ENCODE measurements at regions of chrX and their contacts with region 1.

Region 1: DNA sequence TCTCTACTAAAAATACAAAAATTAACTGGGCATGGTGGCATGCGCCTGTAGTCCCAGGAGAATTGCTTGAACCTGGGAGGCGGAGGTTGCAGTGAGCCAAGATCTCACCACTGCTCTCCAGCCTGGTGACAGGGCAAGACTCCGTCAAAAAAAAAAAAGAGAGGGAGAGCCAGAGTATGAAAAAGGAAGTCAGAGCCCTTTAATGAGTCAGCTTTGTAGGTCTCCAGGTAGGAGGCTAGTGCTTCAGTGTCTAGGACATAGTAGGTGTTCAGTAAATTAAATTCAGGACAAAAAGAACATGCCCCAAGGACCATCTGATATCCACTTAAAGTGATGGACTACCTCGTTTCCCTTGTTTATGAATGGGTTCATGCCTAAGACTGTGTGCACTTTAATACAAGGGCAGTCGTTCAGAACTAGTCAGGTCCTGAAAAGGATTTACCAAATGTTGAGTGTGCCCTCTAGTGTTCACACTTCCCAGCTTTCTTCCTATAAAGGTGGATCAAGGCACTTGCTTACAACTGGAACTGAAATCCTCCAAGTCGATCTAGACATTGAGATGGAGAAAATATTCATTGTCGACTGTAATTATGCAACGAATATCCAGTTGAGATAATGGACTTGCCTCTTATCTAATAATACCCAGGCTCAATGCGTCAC is 29.0 kb downstream of the F9 start:
- DNase-seq: peak; percentile 21 to 57 (median 37)
- H3K4me3 ChIP-seq: no peak overlapping the region
- H3K4me3 Mint-ChIP-seq: no peak overlapping the region
- H3K27ac ChIP-seq: no peak overlapping the region
- H3K27ac Mint-ChIP-seq: peak overlapping the region in 1 of 7 donors; percentile 54
- H3K4me1 ChIP-seq: peaks cover 15% of the 10 kb centered on the region in 2 donors
- H3K4me1 Mint-ChIP-seq: peaks cover 17% of the 10 kb centered on the region
- H3K27me3 ChIP-seq: no peaks in the 10 kb centered on the region
- H3K27me3 Mint-ChIP-seq: peaks cover 0 to 3% (median 1%) of the 10 kb centered on the region in 3 donors
- CTCF ChIP-seq: peak; percentile 55

Region 2: GRCh38 chrX:138775517-138775916 is 784.0 kb before region 1 on chrX:
- intact Hi-C with region 1: loop called (anchors 5 to 10 kb)
- DNase-seq: peak in 2 of 3 donors; percentile 4 to 14
- H3K4me3 ChIP-seq: no peak overlapping the region
- H3K4me3 Mint-ChIP-seq: no peak overlapping the region
- H3K27ac ChIP-seq: no peak overlapping the region
- H3K27ac Mint-ChIP-seq: no peak overlapping the region
- H3K4me1 ChIP-seq: no peaks in the 10 kb centered on the region
- H3K4me1 Mint-ChIP-seq: peaks cover 1% of the 10 kb centered on the region
- H3K27me3 ChIP-seq: no peaks in the 10 kb centered on the region
- H3K27me3 Mint-ChIP-seq: no peaks in the 10 kb centered on the region
- CTCF ChIP-seq: peak; percentile 46

Measured in CD14-positive monocyte (primary cell).